Natural killer cell (primary cell): ENCODE measurements at regions of chr19 and their contacts with region 1.

Region 1: DNA sequence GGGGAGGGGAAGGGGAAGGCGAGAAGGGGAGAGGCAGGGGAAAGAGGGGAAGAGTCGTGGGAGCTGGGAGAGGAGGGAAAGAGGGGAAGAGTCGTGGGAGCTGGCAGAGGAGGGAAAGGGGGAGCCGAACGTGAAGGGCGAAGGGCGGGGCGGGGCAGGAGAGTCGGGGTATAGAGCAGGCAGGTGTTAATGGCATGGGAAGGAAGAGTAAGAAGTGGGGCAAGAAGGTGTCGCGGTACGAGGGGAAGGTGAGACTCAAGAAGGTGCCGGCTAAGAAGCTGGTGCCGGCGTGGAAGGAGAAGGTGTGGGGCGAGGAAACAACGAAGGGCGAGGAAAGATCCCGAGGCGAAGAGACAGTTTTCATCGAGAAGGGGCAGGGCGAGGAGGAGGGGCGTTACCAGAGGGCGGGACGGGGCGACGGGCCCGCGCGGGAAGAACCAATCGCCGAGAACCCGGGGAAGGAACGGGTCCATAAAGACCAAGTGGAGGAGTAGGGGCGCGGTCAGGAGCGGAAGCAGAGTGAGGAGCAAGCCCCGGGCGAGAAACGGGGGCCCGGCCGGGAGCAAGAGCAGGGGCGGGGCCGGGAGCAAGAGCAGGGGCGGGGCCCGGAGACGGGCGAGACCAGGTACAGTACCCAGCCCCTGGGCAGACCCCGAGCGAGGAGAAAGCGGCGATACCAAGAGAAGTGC is 463 bp downstream of the CATSPERG start:
- DNase-seq: peak; percentile 90 to 96
- ATAC-seq: peak; percentile 58 to 80 (median 66)
- H3K4me3 ChIP-seq: peak overlapping the region; percentile 66
- H3K4me3 Mint-ChIP-seq: peak overlapping the region; percentile 99
- H3K27ac ChIP-seq: peak overlapping the region; percentile 86
- H3K27ac Mint-ChIP-seq: peak overlapping the region; percentile 99
- H3K4me1 ChIP-seq: peaks cover 16% of the 10 kb centered on the region
- H3K4me1 Mint-ChIP-seq: peaks cover 18 to 36% of the 10 kb centered on the region in 2 donors
- H3K27me3 ChIP-seq: no peaks in the 10 kb centered on the region
- H3K27me3 Mint-ChIP-seq: no peaks in the 10 kb centered on the region
- CTCF ChIP-seq: no peak

Region 2: DNA sequence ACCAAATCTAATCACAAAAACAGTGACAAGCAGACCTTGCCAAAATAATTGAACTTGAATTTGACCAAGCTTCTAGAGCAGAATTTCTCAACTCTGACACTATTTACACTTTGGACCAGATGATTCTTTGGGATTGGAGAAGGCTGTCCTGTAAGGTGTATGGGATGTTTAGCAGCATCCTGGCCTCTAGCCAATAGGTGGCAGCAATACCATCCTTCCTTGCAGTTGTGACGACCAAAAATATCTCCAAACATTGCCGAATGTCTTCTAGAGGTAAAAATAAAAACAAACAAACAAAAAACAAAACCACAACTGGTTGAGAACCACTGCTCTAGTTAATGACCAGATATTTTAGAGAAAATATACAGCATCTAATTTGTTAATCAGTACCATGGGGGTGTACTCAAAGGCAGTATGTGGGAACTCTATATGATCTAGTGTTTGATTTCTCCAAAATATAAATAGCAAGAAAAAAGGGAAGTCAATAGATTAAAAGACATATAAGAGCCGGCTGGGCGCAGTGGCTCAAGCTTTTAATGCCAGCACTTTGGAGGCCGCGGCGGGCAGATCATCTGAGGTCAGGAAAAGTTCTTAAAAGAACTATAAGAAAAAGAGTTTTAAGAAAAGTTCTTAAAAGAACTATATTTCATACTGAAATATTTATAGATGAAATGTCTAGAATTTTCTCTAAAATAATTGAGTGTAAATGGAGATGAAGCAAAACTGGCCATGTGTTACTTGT is 1026.1 kb before region 1 on chr19:
- intact Hi-C with region 1: loop called (anchors 10 kb)
- DNase-seq: peak in 1 of 2 donors; percentile 66
- ATAC-seq: peak in 1 of 3 donors; percentile 38
- H3K4me3 ChIP-seq: no peak overlapping the region
- H3K4me3 Mint-ChIP-seq: no peak overlapping the region
- H3K27ac ChIP-seq: no peak overlapping the region
- H3K27ac Mint-ChIP-seq: no peak overlapping the region
- H3K4me1 ChIP-seq: peaks cover 15% of the 10 kb centered on the region
- H3K4me1 Mint-ChIP-seq: peaks cover 11 to 16% of the 10 kb centered on the region in 2 donors
- H3K27me3 ChIP-seq: no peaks in the 10 kb centered on the region
- H3K27me3 Mint-ChIP-seq: peaks cover 0 to 3% of the 10 kb centered on the region in 2 donors
- CTCF ChIP-seq: peak; percentile 51

Region 3: GRCh38 chr19:38142176-38143035 is 193.7 kb before region 1 on chr19:
- intact Hi-C with region 1: loop called (anchors 5 kb)
- DNase-seq: peak in 1 of 2 donors; percentile 49
- ATAC-seq: peak in 2 of 3 donors; percentile 44 to 49
- H3K4me3 ChIP-seq: no peak overlapping the region
- H3K4me3 Mint-ChIP-seq: no peak overlapping the region
- H3K27ac ChIP-seq: no peak overlapping the region
- H3K27ac Mint-ChIP-seq: no peak overlapping the region
- H3K4me1 ChIP-seq: no peaks in the 10 kb centered on the region
- H3K4me1 Mint-ChIP-seq: peaks cover 0 to 6% of the 10 kb centered on the region in 2 donors
- H3K27me3 ChIP-seq: no peaks in the 10 kb centered on the region
- H3K27me3 Mint-ChIP-seq: no peaks in the 10 kb centered on the region
- CTCF ChIP-seq: peak; percentile 27

Region 4: DNA sequence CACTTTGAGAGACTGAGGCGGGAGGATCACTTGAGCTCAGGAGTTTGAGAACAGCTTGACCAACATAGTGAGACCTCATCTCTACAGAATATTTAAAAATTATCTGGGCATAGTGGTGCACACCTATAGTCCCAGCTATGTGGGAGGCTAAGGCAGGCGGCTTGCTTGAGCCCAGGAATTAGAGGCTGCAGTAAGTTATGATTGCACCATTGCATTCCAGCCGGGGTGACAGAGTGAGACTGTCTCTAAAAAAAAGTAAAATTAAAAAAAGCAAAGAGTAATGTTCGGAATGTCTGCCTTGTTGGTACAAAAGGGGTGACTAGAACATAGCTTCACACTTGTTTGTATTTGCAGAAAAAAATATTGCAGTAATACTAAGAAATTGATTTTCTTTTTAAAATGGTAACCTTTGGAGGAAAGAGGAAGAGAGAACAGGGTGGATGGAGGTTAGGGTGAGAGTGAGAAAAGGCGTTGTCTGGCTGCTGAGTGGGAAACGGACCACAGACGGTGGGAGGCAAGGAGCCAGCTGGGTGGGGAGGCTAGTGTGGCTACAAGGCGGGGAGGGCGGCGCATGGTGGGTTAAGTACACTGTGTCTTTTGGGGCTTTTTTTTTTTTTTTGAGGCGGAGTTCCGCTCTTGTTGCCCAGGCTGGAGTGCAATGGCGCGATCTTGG is 90.1 kb before region 1 on chr19:
- intact Hi-C with region 1: loop called (anchors 1 kb)
- DNase-seq: no peak
- ATAC-seq: no peak
- H3K4me3 ChIP-seq: no peak overlapping the region
- H3K4me3 Mint-ChIP-seq: no peak overlapping the region
- H3K27ac ChIP-seq: no peak overlapping the region
- H3K27ac Mint-ChIP-seq: no peak overlapping the region
- H3K4me1 ChIP-seq: peaks cover 8% of the 10 kb centered on the region
- H3K4me1 Mint-ChIP-seq: peaks cover 5 to 7% of the 10 kb centered on the region in 2 donors
- H3K27me3 ChIP-seq: no peaks in the 10 kb centered on the region
- H3K27me3 Mint-ChIP-seq: peaks cover 6 to 13% of the 10 kb centered on the region in 2 donors
- CTCF ChIP-seq: no peak

Region 5: GRCh38 chr19:38374429-38375176 is 38.5 kb after region 1 on chr19 and contains the start of gene PSMD8:
- intact Hi-C with region 1: loop called (anchors 1 kb)
- DNase-seq: peak; percentile 97 to 99
- ATAC-seq: peak; percentile 95 to 99 (median 96)
- H3K4me3 ChIP-seq: peak within 1 kb of the TSS; percentile 68
- H3K4me3 Mint-ChIP-seq: peak within 1 kb of the TSS; percentile 100
- H3K27ac ChIP-seq: peak within 1 kb of the TSS; percentile 91
- H3K27ac Mint-ChIP-seq: peak within 1 kb of the TSS; percentile 99 to 100
- H3K4me1 ChIP-seq: peaks cover 26% of the 10 kb centered on the region
- H3K4me1 Mint-ChIP-seq: peaks cover 25 to 33% of the 10 kb centered on the region in 2 donors
- H3K27me3 ChIP-seq: no peaks in the 10 kb centered on the region
- H3K27me3 Mint-ChIP-seq: peaks cover 0 to 4% of the 10 kb centered on the region in 2 donors
- CTCF ChIP-seq: no peak
- total RNA-seq, gene PSMD8: 109 to 115 (median 109) TPM

Region 6: GRCh38 chr19:38425810-38426466 is 89.8 kb after region 1 on chr19 and contains the start of gene RASGRP4:
- intact Hi-C with region 1: no loop called
- DNase-seq: peak in 1 of 2 donors; percentile 64
- ATAC-seq: peak in 2 of 3 donors; percentile 53 to 73
- H3K4me3 ChIP-seq: peak within 1 kb of the TSS; percentile 9
- H3K4me3 Mint-ChIP-seq: peak within 1 kb of the TSS; percentile 47
- H3K27ac ChIP-seq: no peak within 1 kb of the TSS
- H3K27ac Mint-ChIP-seq: peak within 1 kb of the TSS in 1 of 2 donors; percentile 60
- H3K4me1 ChIP-seq: peaks cover 10% of the 10 kb centered on the region
- H3K4me1 Mint-ChIP-seq: peaks cover 5 to 13% of the 10 kb centered on the region in 2 donors
- H3K27me3 ChIP-seq: no peaks in the 10 kb centered on the region
- H3K27me3 Mint-ChIP-seq: peaks cover 4 to 6% of the 10 kb centered on the region in 2 donors
- CTCF ChIP-seq: no peak
- total RNA-seq, gene RASGRP4: 2.3 to 9.3 (median 5.7) TPM